A549 (cell line): ENCODE measurements at regions of chr3 and their contacts with region 1.

Region 1: DNA sequence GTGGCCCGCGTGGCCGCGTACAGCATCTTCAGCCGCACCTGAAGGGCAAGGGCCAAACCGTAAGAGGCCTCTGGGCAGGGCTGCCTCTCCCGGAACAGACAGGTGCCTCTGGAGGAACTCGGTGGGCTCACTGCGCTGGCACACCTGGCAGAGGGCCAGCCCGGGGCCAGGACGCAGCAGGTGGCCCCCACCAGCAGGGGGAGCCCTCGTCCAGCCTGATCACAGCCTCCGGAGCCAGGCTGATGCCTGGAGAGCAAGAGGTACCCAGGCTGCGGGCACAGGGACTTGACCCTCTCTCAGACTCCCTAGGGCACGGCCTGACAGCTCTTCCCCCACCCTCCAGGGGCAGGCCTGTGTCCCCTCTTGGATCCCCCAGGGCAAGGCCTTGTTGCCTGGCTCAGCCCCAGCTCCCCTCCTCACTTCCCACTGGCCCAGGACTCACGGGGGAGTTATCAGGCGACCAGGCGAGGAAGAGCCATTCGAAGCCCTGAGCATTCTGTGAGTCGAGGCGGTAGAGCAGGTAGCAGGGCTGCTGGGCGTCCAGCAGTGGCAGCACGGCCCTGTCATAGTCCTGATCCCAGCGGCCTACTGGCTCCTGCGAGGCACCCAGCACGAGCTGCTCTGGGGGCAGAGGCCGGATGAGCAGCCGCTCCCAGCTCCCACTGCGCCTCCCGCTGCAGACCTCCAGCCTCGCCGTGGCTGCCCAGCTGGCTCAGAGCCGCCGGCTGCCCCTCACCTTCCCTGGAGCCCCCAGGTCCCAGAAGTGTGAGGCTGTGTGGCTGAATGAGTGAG is 6.3 kb upstream of the TLR9 start:
- DNase-seq: peak; percentile 40 to 62
- ATAC-seq: peak; percentile 61 to 85; a peak in 5 of 6 replicates
- H3K4me3 ChIP-seq: no peak overlapping the region
- H3K27ac ChIP-seq: no peak overlapping the region
- H3K4me1 ChIP-seq: peaks cover 6% of the 10 kb centered on the region
- CTCF ChIP-seq: peak; percentile 70
- EP300 ChIP-seq: no peak
- POLR2A ChIP-seq: no peak
- RAD21 ChIP-seq: peak; percentile 59 to 63; a peak in 4 of 5 replicates

Region 2: DNA sequence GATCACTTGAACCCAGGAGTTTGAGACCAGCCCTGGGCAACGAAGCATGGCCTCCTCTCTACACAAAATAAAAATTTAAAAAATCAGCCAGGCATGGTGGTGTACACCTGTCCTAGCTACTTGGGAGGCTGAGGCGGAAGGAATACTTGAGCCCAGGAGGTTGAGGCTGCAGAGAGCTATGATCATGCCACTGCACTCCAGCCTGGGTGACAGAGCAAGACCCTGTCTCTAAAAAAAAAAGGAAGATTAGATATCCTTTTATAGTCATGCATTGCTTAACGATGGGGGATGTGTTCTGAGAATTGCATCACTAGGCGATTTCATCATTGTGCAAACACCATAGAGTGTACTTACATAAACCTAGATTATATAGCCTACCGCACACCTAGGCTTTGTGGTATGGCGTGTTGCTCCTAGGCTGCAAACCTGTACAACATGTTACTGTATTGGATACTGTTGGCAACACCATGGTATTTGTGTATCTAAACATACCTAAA is 21.1 kb before region 1 on chr3:
- CTCF ChIA-PET with region 1: interaction called, 17 read pairs
- POLR2A ChIA-PET with region 1: no interaction called
- DNase-seq: peak in 1 of 2 experiments; percentile 25
- ATAC-seq: no peak
- H3K4me3 ChIP-seq: no peak overlapping the region
- H3K27ac ChIP-seq: peak overlapping the region; percentile 42 to 68; a peak in 3 of 6 replicates
- H3K4me1 ChIP-seq: peaks cover 13% of the 10 kb centered on the region
- CTCF ChIP-seq: no peak
- EP300 ChIP-seq: no peak
- POLR2A ChIP-seq: no peak
- RAD21 ChIP-seq: no peak

Region 3: GRCh38 chr3:52245322-52246263 is 13.9 kb after region 1 on chr3 and contains the start of gene PPM1M:
- CTCF ChIA-PET with region 1: interaction called, 26 read pairs
- POLR2A ChIA-PET with region 1: no interaction called
- DNase-seq: peak; percentile 35 to 46
- ATAC-seq: peak; percentile 57 to 75
- H3K4me3 ChIP-seq: peak within 1 kb of the TSS; percentile 71
- H3K27ac ChIP-seq: peak within 1 kb of the TSS; percentile 83 to 93
- H3K4me1 ChIP-seq: peaks cover 8% of the 10 kb centered on the region
- CTCF ChIP-seq: no peak
- EP300 ChIP-seq: no peak
- POLR2A ChIP-seq: peak; percentile 19
- RAD21 ChIP-seq: no peak
- polyA plus RNA-seq, gene PPM1M: 6.3 and 8.8 TPM in 2 replicates

Region 4: DNA sequence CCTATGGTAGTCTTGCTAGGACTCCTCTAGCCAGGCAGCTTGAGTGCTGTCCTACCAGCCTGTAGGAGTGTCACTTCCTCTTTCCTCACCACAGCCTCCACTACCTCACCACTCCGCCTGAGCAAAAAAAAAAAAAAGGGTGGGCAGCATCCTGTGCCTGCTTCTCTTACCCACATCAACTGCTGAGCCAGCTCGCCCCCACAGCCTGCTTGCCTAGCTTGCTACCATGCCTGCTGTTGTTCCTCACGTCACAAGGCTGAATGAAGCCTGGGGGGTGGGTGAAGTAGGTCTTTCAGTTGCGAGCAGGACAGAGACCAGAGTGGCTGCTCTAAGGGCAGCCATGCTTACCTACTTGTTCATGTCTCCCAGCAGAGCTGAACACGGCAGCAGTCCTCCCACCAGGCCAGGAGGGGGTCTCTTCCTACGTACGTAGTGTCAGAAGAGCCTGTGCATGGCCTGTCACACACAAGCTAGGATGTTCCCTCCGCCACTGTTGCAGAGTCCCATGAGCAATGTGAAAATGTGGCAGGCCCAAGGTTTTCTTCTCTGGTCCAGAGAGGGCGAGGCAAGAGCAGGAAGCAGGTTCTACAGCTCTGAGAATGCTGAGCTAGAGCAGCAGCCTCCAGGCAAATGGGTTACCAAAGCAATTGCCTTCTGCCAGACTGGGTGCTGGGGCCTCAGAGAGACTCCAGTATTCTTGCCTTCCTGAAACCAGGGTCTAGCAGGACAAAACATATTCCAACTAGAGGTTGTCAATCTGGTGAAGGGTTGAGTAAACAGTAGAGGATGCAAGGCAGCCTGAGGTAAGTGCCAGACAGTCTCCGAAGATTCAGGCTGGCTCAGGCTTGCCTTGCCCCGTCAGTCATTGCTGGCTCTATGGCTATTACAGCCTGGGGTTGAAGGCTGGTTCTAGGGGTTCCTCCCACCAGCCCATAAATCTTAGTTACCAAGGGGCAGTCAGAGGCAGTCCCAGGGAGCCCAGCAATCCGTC is 21.9 kb after region 1 on chr3:
- CTCF ChIA-PET with region 1: interaction called, 19 read pairs
- POLR2A ChIA-PET with region 1: no interaction called
- DNase-seq: no peak
- ATAC-seq: no peak
- H3K4me3 ChIP-seq: no peak overlapping the region
- H3K27ac ChIP-seq: no peak overlapping the region
- H3K4me1 ChIP-seq: no peaks in the 10 kb centered on the region
- CTCF ChIP-seq: no peak
- EP300 ChIP-seq: no peak
- POLR2A ChIP-seq: no peak
- RAD21 ChIP-seq: no peak